ENCODE measurements at regions of chr11 and their contacts with region 1.

Region 1: GRCh38 chr11:110429731-110430266 is at the start of gene FDX1:
- DNase-seq: peak; percentile 91
- ATAC-seq: peak; percentile 95
- total RNA-seq, gene FDX1: 23.2 TPM

Region 2: GRCh38 chr11:110296226-110297075 is 133.3 kb before region 1 on chr11 and contains the start of gene RDX:
- intact Hi-C with region 1: loop called (anchors 5 kb)
- DNase-seq: peak; percentile 89
- ATAC-seq: peak; percentile 95
- total RNA-seq, gene RDX: 117 TPM

Region 3: DNA sequence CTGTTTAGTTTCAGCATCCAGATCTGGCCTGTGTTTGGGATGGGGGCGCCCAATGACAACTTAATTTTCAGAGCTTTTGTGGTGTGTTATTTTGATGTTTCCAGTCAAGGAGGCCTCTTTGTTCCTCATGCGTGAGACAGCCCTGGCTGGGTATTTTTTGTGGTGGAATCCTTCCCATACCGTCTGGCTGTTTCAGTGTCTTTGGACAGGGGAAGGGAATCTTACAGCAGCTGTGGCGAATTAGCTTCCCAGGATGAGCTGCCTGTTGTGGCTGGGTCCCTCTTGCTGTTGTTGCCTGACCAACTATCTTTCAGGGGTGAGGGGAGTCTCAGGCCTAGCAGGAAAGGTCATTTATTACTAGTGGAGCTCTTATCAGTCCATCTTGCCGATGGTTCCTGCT is 143.6 kb after region 1 on chr11:
- intact Hi-C with region 1: no loop called
- DNase-seq: no peak
- ATAC-seq: no peak

Region 4: GRCh38 chr11:110858547-110858921 is 428.7 kb after region 1 on chr11:
- intact Hi-C with region 1: no loop called
- DNase-seq: peak; percentile 56
- ATAC-seq: peak; percentile 83

Measured in left ventricle myocardium superior (tissue), 1 donor.